Activated CD8-positive, alpha-beta T cell treated with anti-CD3 and anti-CD28 coated beads for 36 hours (primary cell): ENCODE measurements at regions of chr11 and their contacts with region 1.

Region 1: DNA sequence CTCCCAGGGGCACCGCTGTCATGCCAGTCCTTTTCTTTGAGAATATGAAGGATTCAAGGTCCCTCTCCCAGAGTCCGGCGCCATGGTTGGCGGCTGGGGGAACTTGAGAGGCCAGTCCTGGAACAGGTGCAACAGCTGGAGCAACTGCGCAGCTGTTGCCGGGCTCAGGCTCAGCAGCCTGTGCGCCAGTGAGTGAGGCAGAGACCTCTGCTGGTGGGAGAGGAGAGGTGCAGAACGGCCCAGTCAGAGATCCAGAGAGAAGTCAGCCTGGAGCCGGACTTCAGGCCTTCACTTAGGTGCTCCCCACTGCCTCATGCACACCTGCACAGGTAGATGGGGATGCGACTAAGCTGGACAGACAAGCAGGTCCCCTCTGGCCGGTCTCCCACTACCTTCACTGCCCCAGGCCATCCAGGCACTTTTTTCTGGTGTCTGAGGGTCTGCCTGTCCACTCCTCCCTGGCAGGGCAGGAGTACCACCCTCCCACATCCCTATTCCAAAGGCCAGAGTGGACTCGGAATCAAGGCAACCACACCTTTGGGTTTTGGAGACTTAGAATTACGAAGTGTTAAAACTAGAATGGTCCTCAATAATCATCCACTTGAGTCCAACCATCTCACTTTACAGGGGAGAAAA is 4.6 kb downstream of the CHRDL2 start:
- DNase-seq: peak; percentile 68
- ATAC-seq: peak; percentile 99
- H3K4me3 Mint-ChIP-seq: no peak overlapping the region
- H3K27ac Mint-ChIP-seq: no peak overlapping the region
- H3K4me1 Mint-ChIP-seq: no peaks in the 10 kb centered on the region
- H3K27me3 Mint-ChIP-seq: peaks cover 30% of the 10 kb centered on the region
- CTCF ChIP-seq: peak; percentile 74

Region 2: DNA sequence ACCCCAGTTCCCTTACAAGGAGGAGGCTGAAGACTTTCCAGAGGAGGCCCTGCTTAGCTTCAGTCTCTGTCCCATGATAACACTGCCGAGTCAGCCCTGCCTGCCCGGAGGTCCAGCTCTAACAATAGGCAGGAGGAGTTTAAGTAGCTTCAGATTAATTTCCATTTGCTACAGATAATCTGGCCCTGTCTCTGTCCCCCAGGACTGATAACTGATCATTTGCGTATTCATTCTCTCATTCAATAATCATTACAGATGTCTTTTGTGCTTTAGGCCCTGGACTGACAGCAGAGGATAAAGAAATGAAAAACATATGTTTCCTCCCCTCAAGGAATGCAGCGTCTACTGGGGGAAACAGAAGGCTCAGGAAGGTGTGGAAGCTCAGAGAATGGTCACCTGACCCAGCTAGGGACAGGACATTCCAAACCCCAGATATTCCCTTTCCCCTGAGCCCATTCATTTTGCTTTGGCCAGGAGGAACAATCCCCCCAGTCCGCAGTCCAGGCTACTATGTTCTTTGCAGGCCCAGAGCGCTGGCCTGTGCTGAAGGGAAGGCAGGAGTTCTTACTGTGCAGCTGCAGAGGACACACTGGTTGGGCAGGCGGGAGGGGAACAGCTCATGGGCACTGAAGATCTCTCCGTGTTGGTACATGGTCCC is 16.3 kb before region 1 on chr11:
- CTCF ChIA-PET with region 1: interaction called, 126 read pairs
- POLR2A ChIA-PET with region 1: no interaction called
- intact Hi-C with region 1: no loop called
- DNase-seq: no peak
- ATAC-seq: no peak
- H3K4me3 Mint-ChIP-seq: no peak overlapping the region
- H3K27ac Mint-ChIP-seq: no peak overlapping the region
- H3K4me1 Mint-ChIP-seq: peaks cover 3% of the 10 kb centered on the region
- H3K27me3 Mint-ChIP-seq: no peaks in the 10 kb centered on the region
- CTCF ChIP-seq: no peak

Region 3: GRCh38 chr11:74739546-74740270 is 13.0 kb after region 1 on chr11:
- CTCF ChIA-PET with region 1: interaction called, 30 read pairs
- POLR2A ChIA-PET with region 1: no interaction called
- intact Hi-C with region 1: no loop called
- DNase-seq: peak; percentile 40
- ATAC-seq: peak; percentile 91
- H3K4me3 Mint-ChIP-seq: no peak overlapping the region
- H3K27ac Mint-ChIP-seq: no peak overlapping the region
- H3K4me1 Mint-ChIP-seq: peaks cover 8% of the 10 kb centered on the region
- H3K27me3 Mint-ChIP-seq: peaks cover 15% of the 10 kb centered on the region
- CTCF ChIP-seq: peak; percentile 78